ENCODE measurements at regions of chr6 and their contacts with region 1.

Region 1: DNA sequence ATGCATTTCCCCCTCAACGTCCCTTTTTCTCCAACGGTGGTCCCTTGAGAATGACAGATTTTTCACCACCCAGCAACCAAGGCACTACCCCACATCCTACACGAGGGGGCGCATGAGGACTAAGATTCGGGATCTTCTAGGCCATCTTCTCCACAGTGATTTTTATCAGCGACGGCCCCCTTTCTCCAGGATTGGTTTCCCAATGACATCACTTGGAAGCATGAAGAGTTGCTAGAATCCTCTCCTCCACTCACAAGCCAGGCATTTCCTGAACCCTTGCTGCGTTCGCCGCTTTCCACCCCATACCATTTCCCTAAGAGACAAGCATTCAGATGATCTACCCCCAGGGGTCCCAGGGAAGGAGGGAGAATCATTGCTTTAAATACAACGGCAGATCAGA is 252.0 kb downstream of the HIVEP2 start:
- DNase-seq: peak in 2 of 3 donors; percentile 47 to 71
- ATAC-seq: peak; percentile 68
- H3K4me3 ChIP-seq: no peak overlapping the region
- H3K4me1 ChIP-seq: no peaks in the 10 kb centered on the region
- CTCF ChIP-seq: peak; percentile 76

Region 2: GRCh38 chr6:142605922-142606485 is 86.9 kb before region 1 on chr6:
- intact Hi-C with region 1: no loop called
- DNase-seq: no peak
- ATAC-seq: no peak
- H3K4me3 ChIP-seq: no peak overlapping the region
- H3K4me1 ChIP-seq: no peaks in the 10 kb centered on the region
- CTCF ChIP-seq: no peak

Region 3: GRCh38 chr6:143026696-143027449 is 333.9 kb after region 1 on chr6:
- intact Hi-C with region 1: loop called (anchors 10 kb)
- DNase-seq: peak in 2 of 3 donors; percentile 58 to 61
- ATAC-seq: peak; percentile 53
- H3K4me3 ChIP-seq: no peak overlapping the region
- H3K4me1 ChIP-seq: no peaks in the 10 kb centered on the region
- CTCF ChIP-seq: peak; percentile 23

Region 4: DNA sequence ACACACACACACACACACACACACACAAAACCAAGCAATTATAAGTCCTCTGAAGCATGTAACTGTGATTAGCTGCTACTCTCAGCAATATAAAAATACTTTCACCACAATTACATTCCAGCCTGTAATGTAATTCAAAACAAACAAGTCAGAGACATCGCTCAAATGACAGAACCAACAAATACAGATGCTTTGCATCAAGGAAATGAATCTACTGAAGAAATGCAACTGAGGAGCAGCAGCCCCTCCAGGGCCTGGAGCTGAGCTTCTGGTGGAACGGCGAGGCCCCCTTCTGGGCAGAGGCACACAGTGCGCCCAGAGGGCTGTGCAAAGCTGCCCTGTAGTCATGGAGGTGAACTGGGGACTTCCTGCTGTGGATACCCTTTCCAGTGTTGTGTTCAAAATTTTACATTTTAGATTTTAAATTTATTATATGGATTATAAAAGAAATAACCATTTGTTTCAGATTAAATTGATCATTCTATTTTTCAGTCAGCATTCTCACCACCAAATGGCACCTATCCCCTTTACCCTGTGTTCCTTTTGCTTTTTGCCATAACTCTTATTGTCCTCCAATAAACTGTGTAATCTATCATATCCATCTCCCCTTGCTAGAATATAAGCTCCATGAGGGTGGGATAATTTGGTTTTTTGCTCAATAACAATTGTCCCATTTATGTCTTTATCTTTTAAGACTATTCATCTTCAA is 734.3 kb after region 1 on chr6:
- intact Hi-C with region 1: loop called (anchors 5 to 10 kb)
- DNase-seq: peak; percentile 68 to 79 (median 75)
- ATAC-seq: peak; percentile 97
- H3K4me3 ChIP-seq: no peak overlapping the region
- H3K4me1 ChIP-seq: no peaks in the 10 kb centered on the region
- CTCF ChIP-seq: peak; percentile 78